ENCODE measurements at regions of chr12 and their contacts with region 1.

Region 1: DNA sequence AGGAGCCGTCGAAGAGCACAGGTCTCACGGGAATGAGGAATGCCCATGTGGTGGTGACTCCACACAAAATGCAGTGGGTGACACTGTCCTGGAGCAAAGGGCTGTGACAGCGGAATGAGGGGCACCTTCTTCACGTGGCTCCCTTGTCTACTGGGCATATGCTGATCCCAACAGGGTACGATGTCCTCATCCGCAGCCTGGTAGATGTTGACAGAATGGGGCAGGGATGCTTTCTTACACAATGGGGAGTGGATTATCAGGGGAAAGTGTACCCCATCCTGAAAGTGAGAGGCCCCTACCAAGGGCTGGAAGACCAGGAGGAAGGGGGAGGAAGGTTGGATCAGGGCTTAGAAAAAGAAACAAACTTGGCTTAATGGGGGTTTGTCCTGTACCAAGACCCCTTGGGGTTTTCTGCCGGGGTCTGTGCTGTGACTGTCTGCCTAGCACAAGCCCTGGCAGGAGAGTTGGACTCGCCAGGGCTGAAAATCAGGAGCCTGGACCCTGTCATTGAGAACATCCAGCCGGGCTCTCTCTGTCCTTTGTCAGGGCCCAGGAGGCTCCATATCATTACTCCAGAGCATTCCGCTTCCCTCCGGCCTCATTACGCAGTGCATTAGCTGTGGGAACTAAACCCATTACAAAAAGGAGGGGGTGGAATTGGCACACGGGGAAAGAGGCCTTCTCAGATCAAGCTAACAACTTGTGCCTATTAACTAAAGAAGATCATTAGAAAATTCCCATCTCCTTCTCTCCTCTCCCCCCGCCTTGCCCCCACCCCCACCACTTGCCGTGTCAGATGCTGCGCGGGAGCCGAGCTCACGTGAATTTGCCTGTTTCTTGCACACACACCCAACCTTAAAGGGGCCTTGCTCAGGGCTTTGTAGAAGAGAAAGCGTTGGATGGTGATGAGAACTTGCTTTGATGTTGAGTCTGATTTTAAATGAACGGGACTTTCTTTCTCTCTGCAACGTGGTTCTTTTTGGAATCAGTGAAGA is 171.8 kb upstream of the PARP11 start:
- DNase-seq: no peak
- H3K4me3 Mint-ChIP-seq: no peak overlapping the region
- H3K27ac Mint-ChIP-seq: no peak overlapping the region
- H3K4me1 Mint-ChIP-seq: no peaks in the 10 kb centered on the region
- H3K27me3 Mint-ChIP-seq: peaks cover 15% of the 10 kb centered on the region

Region 2: DNA sequence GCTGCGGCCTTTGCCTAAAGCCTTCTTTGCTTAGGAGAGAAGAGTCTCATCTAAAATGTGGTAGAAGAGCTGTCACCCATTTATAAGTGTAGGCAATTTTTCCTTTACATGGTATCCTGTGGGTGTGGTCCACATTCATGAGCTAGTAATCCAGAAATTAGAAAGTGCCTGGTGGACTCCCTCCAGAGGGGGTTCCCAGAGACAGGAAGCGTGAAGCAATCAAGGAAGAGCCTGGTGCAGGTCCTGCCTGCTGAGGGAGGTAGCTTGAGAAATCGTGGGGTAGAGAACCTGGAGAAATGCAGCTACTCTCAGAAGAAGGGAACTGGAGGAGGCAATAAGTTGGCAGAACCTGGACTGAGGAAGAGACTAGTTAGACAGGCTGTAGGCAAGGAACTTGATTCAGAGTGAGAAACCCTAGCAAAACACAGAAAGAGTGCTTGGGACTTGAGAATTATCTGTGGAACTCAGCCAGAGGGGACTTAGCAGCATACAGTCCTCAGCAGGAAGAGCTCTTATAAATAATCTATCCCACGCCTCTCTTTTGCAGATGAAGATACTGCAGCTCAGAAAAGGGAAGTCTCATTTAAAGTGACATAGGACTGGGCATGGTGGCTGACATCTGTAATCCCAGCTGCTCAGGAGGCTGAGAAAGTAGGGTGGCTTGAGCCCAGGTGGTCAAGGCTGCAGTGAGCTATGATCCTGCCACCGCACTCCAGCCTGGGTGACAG is 46.1 kb after region 1 on chr12:
- intact Hi-C with region 1: loop called (anchors 5 kb)
- DNase-seq: no peak
- H3K4me3 Mint-ChIP-seq: no peak overlapping the region
- H3K27ac Mint-ChIP-seq: peak overlapping the region; percentile 56
- H3K4me1 Mint-ChIP-seq: peaks cover 7% of the 10 kb centered on the region
- H3K27me3 Mint-ChIP-seq: peaks cover 13% of the 10 kb centered on the region